ENCODE measurements at regions of chr1 and their contacts with region 1.

Region 1: DNA sequence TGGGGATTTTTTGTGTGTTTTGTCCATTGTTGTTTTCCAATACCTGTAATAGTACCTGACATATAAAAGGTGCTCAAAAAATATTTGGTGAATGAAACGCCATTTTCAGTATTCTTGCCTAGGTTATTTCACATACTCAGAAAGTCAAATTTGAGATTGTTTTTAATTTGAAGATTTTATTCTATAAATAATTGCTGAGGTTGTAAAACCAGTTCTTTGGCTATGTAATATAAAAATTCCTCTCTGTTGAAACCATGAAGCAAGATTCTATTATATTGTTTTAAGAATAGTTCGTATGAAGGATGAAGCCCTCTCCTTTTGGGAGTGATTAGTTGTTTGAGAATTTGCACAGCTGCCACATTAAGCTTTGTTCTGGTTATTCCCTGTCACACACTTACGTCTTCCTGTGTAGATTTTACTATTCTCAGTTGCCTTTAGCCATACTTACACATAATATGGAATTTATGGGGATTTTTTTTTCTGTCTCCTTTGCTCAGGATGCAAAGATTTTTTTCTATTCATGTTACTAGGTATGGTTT is 60.2 kb upstream of the MPC2 start:
- DNase-seq: no peak
- ATAC-seq: no peak

Region 2: GRCh38 chr1:167943541-167943940 is 53.6 kb before region 1 on chr1:
- intact Hi-C with region 1: loop called in 1 of 2 experiments (anchors 10 kb)
- DNase-seq: no peak
- ATAC-seq: no peak

Region 3: GRCh38 chr1:168057921-168058320 is 60.8 kb after region 1 on chr1:
- intact Hi-C with region 1: no loop called
- DNase-seq: no peak
- ATAC-seq: no peak